ENCODE measurements at regions of chr3 and their contacts with region 1.

Region 1: GRCh38 chr3:186259612-186260383 is 102.2 kb downstream of the DGKG start:
- DNase-seq: peak; percentile 69

Region 2: DNA sequence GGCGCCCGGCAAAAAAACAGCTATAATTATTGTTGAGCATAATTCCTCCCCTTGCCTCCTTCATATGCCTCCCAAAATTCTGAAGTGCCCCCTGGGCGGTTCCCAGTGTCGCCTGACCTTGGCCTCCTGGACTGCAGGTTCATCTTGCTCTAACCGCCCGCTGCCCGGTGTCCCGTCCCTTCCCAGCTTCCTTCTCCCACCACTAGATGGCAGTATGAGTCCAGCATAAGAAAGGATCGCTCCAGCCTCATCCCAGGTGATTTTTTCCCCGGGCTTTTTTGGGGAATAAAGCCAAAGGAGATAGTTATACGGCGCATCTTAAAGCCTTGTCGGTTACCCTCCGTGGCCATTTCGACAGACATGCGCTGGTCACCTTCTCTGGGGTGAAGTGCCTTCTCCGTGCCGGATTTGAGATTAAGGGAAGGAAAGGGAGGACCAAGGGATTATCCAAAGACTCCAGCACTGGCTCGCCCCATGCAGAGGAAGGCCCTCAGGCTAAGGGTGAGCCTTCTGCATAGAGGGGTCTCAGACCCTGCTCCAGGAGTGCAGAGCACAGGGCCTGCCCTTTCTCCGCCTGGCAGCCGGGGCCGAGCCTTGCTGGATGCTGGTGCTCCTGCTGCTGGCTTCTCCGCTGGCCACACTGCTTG is 276.2 kb before region 1 on chr3:
- in situ Hi-C with region 1: loop called (anchors 10 kb)
- DNase-seq: peak; percentile 71

Measured in KBM-7 (cell line).